Dorsolateral prefrontal cortex (tissue), 120 donors: ENCODE measurements at regions of chr18 and their contacts with region 1.

Region 1: GRCh38 chr18:50967714-50968661 is at the start of gene ELAC1:
- DNase-seq: peak; percentile 49 to 87 (median 70)
- H3K4me3 ChIP-seq: peak within 1 kb of the TSS; percentile 60 to 99 (median 85)
- H3K27ac ChIP-seq: peak within 1 kb of the TSS; percentile 87 to 99 (median 97)
- H3K27me3 ChIP-seq: no peaks in the 10 kb centered on the region
- CTCF ChIP-seq: peak in 37 of 56 donors; percentile 7 to 64 (median 29)
- total RNA-seq, gene ELAC1: 3.6 to 15.4 (median 8.0) TPM

Region 2: GRCh38 chr18:50374753-50375391 is 593.1 kb before region 1 on chr18 and contains the start of gene SKA1:
- intact Hi-C with region 1: loop called in 1 of 2 experiments (anchors 5 kb)
- DNase-seq: peak; percentile 78 to 94 (median 86)
- H3K4me3 ChIP-seq: peak within 1 kb of the TSS; percentile 44 to 80 (median 63)
- H3K27ac ChIP-seq: peak within 1 kb of the TSS in 50 of 59 donors; percentile 1 to 88 (median 73)
- H3K27me3 ChIP-seq: no peaks in the 10 kb centered on the region
- CTCF ChIP-seq: peak in 16 of 56 donors; percentile 3 to 33 (median 13)
- total RNA-seq, gene SKA1: 0.15 to 1.7 (median 0.36) TPM in 76 of 120 experiments, not detected in the others

Region 3: GRCh38 chr18:50819728-50820378 is 148.1 kb before region 1 on chr18 and contains the start of gene MRO:
- intact Hi-C with region 1: loop called in 1 of 2 experiments (anchors 5 kb)
- DNase-seq: peak; percentile 83 to 94 (median 86)
- H3K4me3 ChIP-seq: peak within 1 kb of the TSS; percentile 27 to 75 (median 55)
- H3K27ac ChIP-seq: peak within 1 kb of the TSS in 58 of 59 donors; percentile 3 to 91 (median 74)
- H3K27me3 ChIP-seq: no peaks in the 10 kb centered on the region
- CTCF ChIP-seq: peak; percentile 84 to 99 (median 91)
- total RNA-seq, gene MRO: 18.3 to 117 (median 41.7) TPM

Region 4: DNA sequence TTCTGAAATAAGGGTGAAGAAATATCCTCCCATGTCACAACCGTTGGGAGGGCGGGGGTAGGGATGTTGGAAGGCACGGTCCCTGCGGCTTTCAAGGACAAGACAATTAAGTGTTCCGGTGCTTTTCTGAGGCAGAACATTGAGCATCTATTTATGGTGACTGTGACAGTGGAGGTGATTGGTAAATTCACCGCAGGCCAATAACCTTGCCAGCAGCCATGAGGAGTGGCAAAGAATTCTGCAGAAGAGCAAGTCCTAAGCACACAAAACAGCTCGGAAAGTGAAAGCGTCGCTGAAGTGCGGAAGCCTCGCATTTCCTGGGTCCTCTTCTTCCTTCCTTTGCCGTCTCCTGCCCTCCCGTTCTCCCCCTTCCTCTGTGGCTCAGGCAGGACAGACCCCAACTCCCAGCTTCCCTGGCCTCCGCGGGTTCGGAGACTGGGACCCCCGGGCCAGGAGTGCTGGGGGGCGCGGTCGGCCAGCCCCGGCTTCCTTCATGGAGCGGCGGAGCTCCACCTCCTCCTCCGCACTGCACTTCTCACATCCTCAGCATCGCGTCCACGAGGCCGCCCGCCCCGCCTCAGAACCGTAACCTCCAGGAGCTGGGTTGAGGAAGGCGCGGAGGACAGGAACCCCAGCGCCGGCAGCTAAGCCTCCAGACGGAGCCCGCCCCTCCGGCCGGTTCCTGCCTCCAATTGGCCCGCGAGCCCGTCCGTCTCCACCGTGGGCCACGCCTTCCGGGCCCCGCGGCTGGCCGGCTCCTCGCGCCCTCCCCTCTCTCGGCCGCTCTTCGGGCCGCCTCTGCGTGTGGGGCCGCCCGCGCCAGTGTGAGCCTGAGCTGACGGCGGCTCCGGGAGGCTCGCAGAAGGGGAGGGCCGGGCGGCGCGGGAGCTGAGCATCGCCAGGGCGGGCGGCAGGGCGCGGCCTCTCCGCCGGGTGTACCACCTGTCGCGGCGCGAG is 89.4 kb before region 1 on chr18 and contains the start of gene ME2:
- intact Hi-C with region 1: loop called (anchors 1 to 2 kb)
- DNase-seq: peak; percentile 81 to 98 (median 92)
- H3K4me3 ChIP-seq: peak within 1 kb of the TSS; percentile 64 to 99 (median 91)
- H3K27ac ChIP-seq: peak within 1 kb of the TSS; percentile 44 to 96 (median 88)
- H3K27me3 ChIP-seq: no peaks in the 10 kb centered on the region
- CTCF ChIP-seq: peak in 12 of 56 donors; percentile 3 to 30 (median 14)
- total RNA-seq, gene ME2: 31.2 to 57.8 (median 42.9) TPM

Region 5: GRCh38 chr18:51029694-51030536 is 61.9 kb after region 1 on chr18 and contains the start of gene SMAD4:
- intact Hi-C with region 1: loop called (anchors 1 kb)
- DNase-seq: peak; percentile 90 to 97 (median 94)
- H3K4me3 ChIP-seq: peak within 1 kb of the TSS; percentile 58 to 96 (median 83)
- H3K27ac ChIP-seq: peak within 1 kb of the TSS; percentile 85 to 100 (median 96)
- H3K27me3 ChIP-seq: no peaks in the 10 kb centered on the region
- CTCF ChIP-seq: peak in 31 of 56 donors; percentile 2 to 55 (median 29)
- total RNA-seq, gene SMAD4: 64.8 to 122 (median 86.8) TPM